PC-3 (cell line): ENCODE measurements at regions of chr2 and their contacts with region 1.

Region 1: GRCh38 chr2:134897932-134898331 is 20.7 kb upstream of the CCNT2 start:
- DNase-seq: peak; percentile 47
- ATAC-seq: no peak
- H3K4me3 ChIP-seq: no peak overlapping the region
- H3K27ac ChIP-seq: no peak overlapping the region
- H3K4me1 ChIP-seq: 0 out of 2 replicates have a peak, but pooled peaks cover 4% of the 10 kb centered on the region
- H3K27me3 ChIP-seq: no peaks in the 10 kb centered on the region
- CTCF ChIP-seq: peak; percentile 58

Region 2: DNA sequence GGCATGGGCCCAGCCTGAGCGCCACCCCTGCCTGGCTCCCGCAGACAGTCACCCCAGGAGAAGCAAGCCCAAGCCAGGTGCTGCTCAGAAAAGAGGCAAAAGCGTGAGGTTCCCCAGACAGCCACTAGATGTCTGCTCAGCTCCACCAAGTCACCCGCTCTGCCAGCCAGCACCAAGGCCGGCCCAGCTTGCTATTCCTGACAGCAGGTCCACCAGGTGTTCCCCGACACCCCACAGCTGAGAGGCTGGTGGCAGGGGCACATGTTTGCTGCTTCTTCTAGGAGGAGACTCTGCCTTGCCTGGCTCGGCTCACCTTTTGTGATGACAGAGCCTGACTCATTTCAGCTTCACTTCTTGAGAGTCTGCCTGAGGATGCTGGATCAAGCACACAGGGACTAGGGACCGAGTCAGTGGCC is 437.3 kb before region 1 on chr2:
- CTCF ChIA-PET with region 1: interaction called, 3 read pairs
- POLR2A ChIA-PET with region 1: no interaction called
- intact Hi-C with region 1: loop called (anchors 2 kb)
- DNase-seq: peak; percentile 75
- ATAC-seq: peak; percentile 94
- H3K4me3 ChIP-seq: no peak overlapping the region
- H3K27ac ChIP-seq: no peak overlapping the region
- H3K4me1 ChIP-seq: no peaks in the 10 kb centered on the region
- H3K27me3 ChIP-seq: no peaks in the 10 kb centered on the region
- CTCF ChIP-seq: peak; percentile 83

Region 3: GRCh38 chr2:134574611-134575330 is 323.2 kb before region 1 on chr2:
- CTCF ChIA-PET with region 1: no interaction called
- POLR2A ChIA-PET with region 1: no interaction called
- intact Hi-C with region 1: loop called (anchors 10 kb)
- DNase-seq: no peak
- ATAC-seq: no peak
- H3K4me3 ChIP-seq: no peak overlapping the region
- H3K27ac ChIP-seq: no peak overlapping the region
- H3K4me1 ChIP-seq: no peaks in the 10 kb centered on the region
- H3K27me3 ChIP-seq: no peaks in the 10 kb centered on the region
- CTCF ChIP-seq: no peak

Region 4: DNA sequence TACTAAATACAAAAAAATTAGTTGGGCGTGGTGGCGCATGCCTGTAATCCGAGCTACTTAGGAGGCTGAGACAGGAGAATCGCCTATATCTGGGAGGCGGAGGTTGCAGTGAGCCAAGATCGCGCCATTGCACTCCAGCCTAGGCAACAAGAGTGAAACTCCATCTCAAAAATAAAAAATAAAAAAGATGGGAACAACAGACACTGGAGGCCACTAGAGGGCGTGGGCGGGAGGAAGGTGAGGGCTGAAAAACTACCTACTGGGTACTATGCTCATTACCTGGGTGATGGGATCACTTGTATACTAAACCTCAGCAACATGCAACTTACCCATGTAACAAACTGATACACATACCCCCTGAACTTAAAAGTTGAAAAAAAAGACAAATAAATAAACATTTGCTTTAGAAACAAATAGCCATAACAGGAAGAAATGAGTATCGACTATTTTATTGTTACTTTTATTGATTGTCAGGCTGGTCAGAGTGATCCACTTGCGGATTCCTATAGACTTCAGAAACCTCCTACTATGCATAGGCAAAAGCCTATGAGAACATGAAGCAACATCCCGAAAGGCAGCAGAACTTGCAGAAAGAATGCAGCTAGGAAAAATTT is 240.2 kb before region 1 on chr2:
- CTCF ChIA-PET with region 1: no interaction called
- POLR2A ChIA-PET with region 1: no interaction called
- intact Hi-C with region 1: loop called (anchors 2 kb)
- DNase-seq: peak; percentile 57
- ATAC-seq: peak; percentile 46; the same call in 1 of the 2 replicates
- H3K4me3 ChIP-seq: no peak overlapping the region
- H3K27ac ChIP-seq: no peak overlapping the region
- H3K4me1 ChIP-seq: no peaks in the 10 kb centered on the region
- H3K27me3 ChIP-seq: no peaks in the 10 kb centered on the region
- CTCF ChIP-seq: peak; percentile 74

Region 5: GRCh38 chr2:134712736-134713135 is 185.2 kb before region 1 on chr2:
- CTCF ChIA-PET with region 1: no interaction called
- POLR2A ChIA-PET with region 1: no interaction called
- intact Hi-C with region 1: no loop called
- DNase-seq: no peak
- ATAC-seq: no peak
- H3K4me3 ChIP-seq: no peak overlapping the region
- H3K27ac ChIP-seq: no peak overlapping the region
- H3K4me1 ChIP-seq: peaks cover 12% of the 10 kb centered on the region
- H3K27me3 ChIP-seq: peaks cover 7% of the 10 kb centered on the region
- CTCF ChIP-seq: no peak

Region 6: DNA sequence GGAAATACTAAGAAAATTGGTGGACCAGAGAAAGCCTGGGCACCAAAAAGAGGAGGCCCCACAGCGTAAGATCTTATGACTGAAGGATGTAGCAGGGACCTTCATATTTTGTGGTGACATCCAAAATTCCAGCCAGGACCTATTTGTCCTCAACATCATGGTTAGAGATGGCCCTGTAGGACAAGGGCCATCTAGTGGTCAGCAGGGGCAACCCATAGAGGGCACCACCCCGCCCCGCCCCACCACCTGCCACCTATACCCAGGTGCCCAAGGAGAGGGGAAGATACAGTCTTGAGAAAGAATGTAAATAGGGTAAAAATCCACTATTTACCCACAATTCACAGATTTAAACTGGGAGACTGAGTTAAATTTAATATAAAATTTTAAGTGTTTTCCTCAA is 119.6 kb before region 1 on chr2:
- CTCF ChIA-PET with region 1: no interaction called
- POLR2A ChIA-PET with region 1: no interaction called
- intact Hi-C with region 1: loop called (anchors 10 kb)
- DNase-seq: no peak
- ATAC-seq: peak; percentile 25; the same call in 1 of the 2 replicates
- H3K4me3 ChIP-seq: no peak overlapping the region
- H3K27ac ChIP-seq: no peak overlapping the region
- H3K4me1 ChIP-seq: peaks cover 30% of the 10 kb centered on the region
- H3K27me3 ChIP-seq: no peaks in the 10 kb centered on the region
- CTCF ChIP-seq: peak; percentile 63

Region 7: GRCh38 chr2:134819334-134819733 is 78.6 kb before region 1 on chr2:
- CTCF ChIA-PET with region 1: no interaction called
- POLR2A ChIA-PET with region 1: no interaction called
- intact Hi-C with region 1: loop called (anchors 5 kb)
- DNase-seq: peak; percentile 95
- ATAC-seq: peak; percentile 68
- H3K4me3 ChIP-seq: no peak overlapping the region
- H3K27ac ChIP-seq: peak overlapping the region; percentile 98
- H3K4me1 ChIP-seq: peaks cover 35% of the 10 kb centered on the region
- H3K27me3 ChIP-seq: no peaks in the 10 kb centered on the region
- CTCF ChIP-seq: no peak

Region 8: GRCh38 chr2:134873152-134873551 is 24.8 kb before region 1 on chr2:
- CTCF ChIA-PET with region 1: no interaction called
- POLR2A ChIA-PET with region 1: no interaction called
- intact Hi-C with region 1: no loop called
- DNase-seq: no peak
- ATAC-seq: no peak
- H3K4me3 ChIP-seq: no peak overlapping the region
- H3K27ac ChIP-seq: no peak overlapping the region
- H3K4me1 ChIP-seq: peaks cover 13% of the 10 kb centered on the region; the same call in 1 of the 2 replicates
- H3K27me3 ChIP-seq: no peaks in the 10 kb centered on the region
- CTCF ChIP-seq: no peak

Region 9: DNA sequence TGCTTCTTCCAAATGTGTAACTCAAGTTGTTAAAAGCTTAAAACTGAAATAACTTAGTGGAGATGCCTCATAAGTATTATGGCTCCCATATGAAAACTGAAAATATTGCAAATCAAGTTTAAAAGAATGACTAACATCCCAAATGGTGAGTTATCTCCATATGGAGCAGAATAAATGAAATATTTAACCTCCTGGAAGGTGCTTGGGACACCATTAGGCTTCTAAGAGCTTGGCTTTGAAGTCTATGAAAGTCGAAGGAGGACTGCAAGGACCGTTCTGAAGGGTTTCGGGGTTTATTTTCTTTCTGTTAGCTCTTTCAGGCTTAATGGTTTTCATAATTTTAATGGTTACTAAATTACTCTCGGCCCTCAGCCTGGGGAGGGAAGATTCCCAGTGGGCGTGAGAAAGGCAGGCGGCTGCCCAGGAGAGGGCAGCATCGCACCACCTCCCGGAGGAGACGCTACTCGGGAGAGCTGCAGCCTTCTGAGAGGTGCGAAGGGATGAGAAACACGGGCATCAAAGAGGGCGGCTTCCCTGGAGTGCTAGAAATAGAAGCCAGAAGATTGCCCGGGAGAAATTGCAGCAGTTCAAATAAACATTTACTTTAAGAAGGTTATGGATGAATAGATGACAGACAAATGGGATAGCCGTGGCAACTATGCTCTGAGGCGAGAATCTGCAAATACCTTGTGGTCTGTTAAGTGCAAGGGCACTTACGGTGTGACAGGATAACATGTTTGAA is 106.2 kb after region 1 on chr2:
- CTCF ChIA-PET with region 1: no interaction called
- POLR2A ChIA-PET with region 1: no interaction called
- intact Hi-C with region 1: no loop called
- DNase-seq: peak; percentile 84
- ATAC-seq: peak; percentile 100
- H3K4me3 ChIP-seq: no peak overlapping the region
- H3K27ac ChIP-seq: no peak overlapping the region
- H3K4me1 ChIP-seq: no peaks in the 10 kb centered on the region
- H3K27me3 ChIP-seq: no peaks in the 10 kb centered on the region
- CTCF ChIP-seq: peak; percentile 95

Region 10: GRCh38 chr2:135132314-135132713 is 234.4 kb after region 1 on chr2:
- CTCF ChIA-PET with region 1: no interaction called
- POLR2A ChIA-PET with region 1: no interaction called
- intact Hi-C with region 1: no loop called
- DNase-seq: no peak
- ATAC-seq: no peak
- H3K4me3 ChIP-seq: no peak overlapping the region
- H3K27ac ChIP-seq: no peak overlapping the region
- H3K4me1 ChIP-seq: no peaks in the 10 kb centered on the region
- H3K27me3 ChIP-seq: no peaks in the 10 kb centered on the region
- CTCF ChIP-seq: no peak